ENCODE measurements at regions of chrX and their contacts with region 1.

Region 1: DNA sequence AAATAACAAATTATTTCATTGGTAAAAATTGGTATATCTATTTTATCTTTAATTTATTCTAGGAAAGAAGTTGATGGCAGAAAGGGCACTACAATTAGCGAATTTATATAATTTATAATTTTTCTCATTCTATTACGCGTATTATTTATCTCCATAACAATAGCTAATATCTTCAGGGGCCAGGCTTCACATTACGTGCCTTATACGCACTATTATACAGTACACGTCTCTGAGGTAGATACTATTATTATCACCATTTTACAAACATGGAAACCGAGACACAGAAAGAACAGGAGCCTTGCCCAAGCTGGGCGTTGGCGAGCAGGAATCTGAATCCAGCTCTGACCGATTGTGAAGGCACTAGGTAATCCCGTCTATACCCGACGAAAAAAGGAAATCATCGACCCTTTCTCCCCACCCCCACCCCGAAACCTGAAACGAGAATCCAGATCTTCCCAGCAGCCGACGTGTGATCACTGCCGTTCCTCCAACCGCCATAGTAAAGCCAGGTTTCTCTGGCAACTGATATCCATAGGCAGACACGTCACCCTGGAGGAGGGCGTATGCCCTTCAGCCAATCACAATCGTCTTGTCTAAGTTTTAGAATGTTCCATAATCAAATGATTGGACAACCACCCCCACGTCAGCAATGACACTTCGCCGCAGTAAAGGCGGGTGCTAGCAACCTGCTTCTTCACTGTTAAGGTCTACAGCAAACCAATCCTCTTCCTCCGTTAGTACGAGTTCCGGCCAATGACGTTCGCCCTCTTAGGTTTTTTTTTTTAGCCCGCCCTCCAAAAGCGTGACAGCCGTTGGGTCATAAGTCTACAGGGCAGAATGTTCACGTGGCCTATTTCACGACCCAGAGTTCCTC is at the start of gene MORF4L2:
- DNase-seq: peak; percentile 69 to 95 (median 86)

Region 2: GRCh38 chrX:103310542-103311398 is 375.7 kb before region 1 on chrX and contains the start of gene BEX2:
- intact Hi-C with region 1: no loop called
- DNase-seq: peak; percentile 81 to 96 (median 88)

Region 3: GRCh38 chrX:103533511-103534216 is 152.8 kb before region 1 on chrX:
- intact Hi-C with region 1: loop called (anchors 5 kb)
- DNase-seq: peak; percentile 19 to 93 (median 82)

Region 4: DNA sequence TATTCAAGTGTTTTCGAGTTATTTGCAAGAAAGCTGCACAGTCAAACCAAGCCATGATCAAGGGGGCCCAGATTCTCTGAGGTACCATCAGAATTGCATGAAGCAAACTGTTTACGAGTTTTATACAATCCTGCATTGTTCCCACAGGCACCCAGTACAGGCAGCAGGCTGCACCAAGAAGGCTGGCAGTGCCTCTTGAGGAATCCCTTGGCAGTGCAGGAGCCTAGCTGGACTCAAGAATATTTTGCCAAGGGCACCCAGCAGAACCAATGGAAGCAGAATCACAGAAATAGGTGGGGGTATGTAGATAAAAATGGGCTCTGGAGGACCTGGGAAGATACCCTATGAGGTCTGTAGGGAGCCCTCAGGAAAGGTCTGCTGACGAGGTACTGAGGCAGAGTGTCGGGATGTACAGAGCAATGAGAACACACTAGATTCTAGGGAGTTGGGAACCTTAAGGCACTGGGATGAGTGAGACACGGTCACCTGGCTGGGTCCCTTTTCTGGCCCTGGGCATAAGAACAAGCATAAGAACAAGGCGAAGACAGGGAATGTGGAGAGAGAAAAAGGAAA is 87.7 kb after region 1 on chrX:
- intact Hi-C with region 1: loop called (anchors 2 kb)
- DNase-seq: peak in 33 of 42 donors; percentile 2 to 75 (median 52)

Region 5: DNA sequence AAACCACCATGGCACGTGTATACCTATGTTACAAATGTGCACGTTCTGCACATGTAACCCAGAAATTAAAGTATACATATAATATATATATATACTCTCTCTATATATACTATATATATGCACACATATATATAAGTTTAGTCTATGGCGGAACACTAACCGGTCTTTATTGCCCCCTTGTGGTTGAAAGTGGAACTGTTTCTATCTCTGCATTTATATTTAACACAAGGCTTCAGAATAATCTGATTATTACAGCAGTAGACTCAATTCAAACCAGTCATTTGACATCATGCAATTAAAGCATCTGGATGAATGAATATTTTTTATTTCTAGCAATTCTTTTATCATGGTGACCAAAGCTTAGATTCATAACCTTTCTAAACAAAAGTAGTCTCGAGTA is 131.1 kb after region 1 on chrX:
- intact Hi-C with region 1: loop called (anchors 5 kb)
- DNase-seq: peak in 11 of 42 donors; percentile 16 to 73 (median 37)

Region 6: GRCh38 chrX:103831803-103832544 is 145.5 kb after region 1 on chrX and contains the start of gene RAB9B:
- intact Hi-C with region 1: loop called (anchors 5 kb)
- DNase-seq: peak; percentile 30 to 91 (median 80)

Region 7: GRCh38 chrX:103918581-103919269 is 232.3 kb after region 1 on chrX:
- intact Hi-C with region 1: no loop called
- DNase-seq: peak; percentile 14 to 80 (median 63)

Region 8: DNA sequence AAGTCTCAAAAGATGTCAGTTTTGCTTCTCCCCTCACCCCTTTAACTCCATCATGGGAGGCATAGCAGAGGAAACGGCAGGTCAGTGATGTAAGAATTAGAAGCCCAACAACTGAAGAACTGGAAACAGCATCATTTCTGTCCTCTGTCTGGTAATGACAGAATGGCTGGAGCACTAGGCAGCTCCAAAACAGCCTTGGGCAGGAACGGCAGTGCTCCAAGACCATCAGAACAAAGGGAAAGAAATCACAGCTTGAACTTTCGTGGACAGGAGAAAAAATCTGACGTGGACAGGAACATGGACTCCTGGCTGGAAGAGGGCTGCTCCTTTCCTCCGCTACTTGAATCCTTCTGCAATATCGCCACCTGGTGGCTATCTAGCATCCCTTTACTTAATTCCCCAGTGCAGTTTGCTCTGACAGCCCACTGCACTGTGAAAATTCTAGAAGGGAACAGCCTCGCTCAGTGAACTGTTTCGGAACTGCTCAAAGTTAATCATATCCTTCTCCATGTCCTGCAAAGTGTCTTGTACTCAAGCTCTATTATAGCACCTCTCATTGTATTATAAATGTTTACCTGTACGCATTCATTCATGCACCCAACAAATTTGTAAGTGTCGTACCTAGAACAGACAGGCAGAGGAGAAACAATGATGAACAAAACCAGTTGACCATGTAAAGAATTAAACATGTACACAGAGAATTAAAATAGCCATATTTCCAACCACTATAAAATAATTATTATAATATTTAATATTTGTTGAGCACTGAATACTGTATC is 450.0 kb after region 1 on chrX:
- intact Hi-C with region 1: loop called (anchors 5 kb)
- DNase-seq: peak in 41 of 42 donors; percentile 12 to 91 (median 75)